Right cardiac atrium (tissue), 5 donors: ENCODE measurements at regions of chr4 and their contacts with region 1.

Region 1: DNA sequence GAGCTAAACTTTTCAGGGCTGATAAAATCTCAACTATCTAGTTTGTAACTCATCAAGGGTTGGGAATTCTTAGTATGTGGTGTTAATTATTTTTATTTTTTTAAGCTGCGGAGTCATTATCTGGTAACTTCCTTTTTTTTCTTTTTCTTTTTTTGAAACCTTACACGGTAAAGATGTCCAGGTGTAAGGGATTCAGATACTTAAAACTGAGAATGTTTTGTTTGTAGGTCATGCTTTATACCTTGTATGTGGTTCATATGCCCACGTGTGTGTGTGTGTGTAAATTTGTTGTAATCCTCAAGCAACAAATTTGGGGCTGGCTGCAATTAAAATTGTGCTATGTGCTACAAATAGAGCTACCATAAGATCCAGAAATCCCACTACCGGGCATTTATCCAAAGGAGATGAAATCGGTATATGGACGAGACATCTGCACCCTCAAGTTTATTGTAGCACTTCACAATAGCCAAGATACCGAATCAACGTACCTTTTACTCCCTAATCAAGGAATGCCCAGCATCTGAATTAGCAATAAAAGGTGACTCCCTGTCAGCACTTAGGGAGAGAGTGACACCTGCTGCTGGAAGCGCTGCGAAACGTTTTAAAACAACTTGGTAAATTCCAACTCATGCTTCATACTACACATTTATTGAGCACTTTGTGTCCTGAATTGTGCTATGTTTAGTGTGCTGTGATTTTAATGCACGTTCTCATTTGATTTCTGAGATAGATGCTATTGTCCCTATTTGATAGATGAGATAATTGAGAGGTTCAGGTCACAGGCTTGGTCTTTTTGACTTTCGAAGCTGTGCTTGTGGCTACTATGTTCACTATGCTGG is 16.1 kb downstream of the MSMO1 start:
- DNase-seq: peak in 1 of 3 donors; percentile 52
- ATAC-seq: no peak
- H3K4me3 ChIP-seq: no peak overlapping the region
- H3K27ac ChIP-seq: no peak overlapping the region
- H3K4me1 ChIP-seq: no peaks in the 10 kb centered on the region
- H3K27me3 ChIP-seq: no peaks in the 10 kb centered on the region

Region 2: GRCh38 chr4:165131247-165131832 is 212.2 kb before region 1 on chr4:
- intact Hi-C with region 1: loop called (anchors 5 to 10 kb)
- DNase-seq: peak in 2 of 3 donors; percentile 28 to 58
- ATAC-seq: peak; percentile 67 to 82
- H3K4me3 ChIP-seq: no peak overlapping the region
- H3K27ac ChIP-seq: no peak overlapping the region
- H3K4me1 ChIP-seq: peaks cover 1% of the 10 kb centered on the region
- H3K27me3 ChIP-seq: no peaks in the 10 kb centered on the region